AG04450 (cell line): ENCODE measurements at regions of chr6 and their contacts with region 1.

Region 1: GRCh38 chr6:32933636-32934085 is 7.2 kb downstream of the HLA-DMB start:
- DNase-seq: peak; percentile 56
- H3K4me3 ChIP-seq: no peak overlapping the region
- H3K27ac ChIP-seq: no peak overlapping the region
- H3K27me3 ChIP-seq: peaks cover 25% of the 10 kb centered on the region
- CTCF ChIP-seq: peak; percentile 82

Region 2: GRCh38 chr6:32879691-32880090 is 54.0 kb before region 1 on chr6:
- CTCF ChIA-PET with region 1: interaction called, 11 read pairs
- POLR2A ChIA-PET with region 1: no interaction called
- DNase-seq: no peak
- H3K4me3 ChIP-seq: no peak overlapping the region
- H3K27ac ChIP-seq: no peak overlapping the region
- H3K27me3 ChIP-seq: peaks cover 27% of the 10 kb centered on the region
- CTCF ChIP-seq: no peak

Region 3: DNA sequence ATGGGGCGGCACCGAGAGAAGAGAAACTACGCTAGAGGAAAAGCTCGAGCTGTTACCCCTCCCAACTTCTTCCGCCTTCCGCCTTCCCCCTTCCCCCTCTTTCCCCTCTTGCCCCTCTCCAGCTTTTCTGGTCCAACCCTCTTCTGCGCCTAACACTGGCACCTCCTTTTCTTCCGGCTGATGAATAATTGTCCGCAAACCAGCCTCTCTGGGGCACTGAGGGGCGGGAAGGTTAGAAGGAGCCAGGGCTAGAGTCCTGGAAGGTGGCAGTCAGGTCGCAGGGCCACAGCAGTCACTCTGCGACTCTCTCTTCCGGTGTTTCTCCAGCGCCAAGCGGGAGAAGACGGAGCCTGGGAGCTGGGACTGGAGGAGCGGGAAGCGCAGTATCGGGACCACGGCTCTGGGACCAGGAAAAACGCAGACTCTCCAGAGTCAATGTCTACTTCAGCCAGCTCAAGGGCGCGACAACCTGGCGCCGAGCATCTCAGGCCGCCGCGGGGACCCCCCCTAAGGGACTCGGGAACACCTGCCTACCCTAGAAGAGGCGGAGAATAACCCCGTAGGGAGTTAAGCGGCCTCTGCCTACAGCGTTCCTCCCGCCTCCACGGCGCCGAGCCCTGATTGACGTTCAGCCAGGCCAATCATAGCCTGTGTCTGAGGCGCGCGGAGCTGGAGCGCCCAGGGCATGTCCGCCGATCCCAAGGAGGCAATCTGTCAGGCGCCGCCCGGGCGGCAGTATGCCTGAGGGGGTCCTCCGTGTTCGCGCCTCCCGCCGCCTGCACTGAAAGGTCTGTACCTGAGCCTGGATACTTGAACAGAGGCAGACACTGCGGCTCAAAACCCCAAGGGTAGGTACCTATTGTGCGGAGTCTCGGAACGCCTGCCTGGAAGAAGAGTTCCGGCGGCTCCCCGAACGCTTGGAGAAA is 39.3 kb before region 1 on chr6:
- CTCF ChIA-PET with region 1: interaction called, 16 read pairs
- POLR2A ChIA-PET with region 1: no interaction called
- DNase-seq: peak; percentile 77
- H3K4me3 ChIP-seq: peak overlapping the region; percentile 77
- H3K27ac ChIP-seq: peak overlapping the region; percentile 66
- H3K27me3 ChIP-seq: no peaks in the 10 kb centered on the region
- CTCF ChIP-seq: no peak

Region 4: GRCh38 chr6:32912951-32913350 is 20.7 kb before region 1 on chr6:
- CTCF ChIA-PET with region 1: interaction called, 15 read pairs
- POLR2A ChIA-PET with region 1: no interaction called
- DNase-seq: no peak
- H3K4me3 ChIP-seq: no peak overlapping the region
- H3K27ac ChIP-seq: no peak overlapping the region
- H3K27me3 ChIP-seq: peaks cover 2% of the 10 kb centered on the region
- CTCF ChIP-seq: no peak

Region 5: DNA sequence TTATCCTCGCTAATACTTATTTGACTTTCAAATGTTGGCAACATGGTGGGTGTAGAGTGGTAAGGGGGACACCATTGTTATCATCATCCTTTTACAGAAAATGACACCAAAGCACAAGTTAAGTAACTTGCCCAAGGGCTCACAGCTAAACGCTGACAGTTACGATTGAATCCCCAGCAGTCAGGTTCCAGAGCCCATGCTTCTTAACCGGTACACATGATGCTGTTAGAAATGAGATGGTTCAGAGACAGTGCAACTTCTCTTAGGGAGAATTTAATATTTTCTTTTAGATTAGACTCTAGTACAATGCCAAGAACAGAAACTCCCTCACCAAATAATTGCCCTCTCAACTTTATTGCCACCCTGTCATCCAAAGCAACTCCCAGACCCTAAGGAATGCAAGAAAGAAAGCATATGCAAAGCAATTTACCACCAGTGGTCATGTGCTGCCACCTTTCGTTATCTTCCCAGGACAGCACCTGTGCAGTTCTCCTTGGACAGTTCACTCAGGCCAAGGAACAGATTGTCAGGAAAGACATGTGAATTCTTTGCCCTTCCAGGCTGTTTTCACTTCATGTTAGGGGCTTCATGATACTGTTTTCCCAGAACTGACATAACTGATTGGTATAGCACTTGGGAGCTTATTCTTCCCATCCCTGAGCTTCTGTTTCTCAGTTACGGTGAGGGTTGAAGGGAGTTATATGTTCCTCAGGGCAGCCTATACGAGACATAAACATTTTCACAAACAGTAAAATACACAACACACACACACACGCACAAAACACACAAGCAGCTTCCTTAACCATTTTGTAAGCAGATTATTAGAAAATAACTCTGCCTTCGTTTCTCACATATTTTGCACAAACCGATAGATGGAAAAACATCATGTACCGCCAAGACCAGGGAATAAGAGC is 14.1 kb after region 1 on chr6:
- CTCF ChIA-PET with region 1: interaction called, 144 read pairs
- POLR2A ChIA-PET with region 1: no interaction called
- DNase-seq: no peak
- H3K4me3 ChIP-seq: no peak overlapping the region
- H3K27ac ChIP-seq: no peak overlapping the region
- H3K27me3 ChIP-seq: no peaks in the 10 kb centered on the region
- CTCF ChIP-seq: peak; percentile 56

Region 6: DNA sequence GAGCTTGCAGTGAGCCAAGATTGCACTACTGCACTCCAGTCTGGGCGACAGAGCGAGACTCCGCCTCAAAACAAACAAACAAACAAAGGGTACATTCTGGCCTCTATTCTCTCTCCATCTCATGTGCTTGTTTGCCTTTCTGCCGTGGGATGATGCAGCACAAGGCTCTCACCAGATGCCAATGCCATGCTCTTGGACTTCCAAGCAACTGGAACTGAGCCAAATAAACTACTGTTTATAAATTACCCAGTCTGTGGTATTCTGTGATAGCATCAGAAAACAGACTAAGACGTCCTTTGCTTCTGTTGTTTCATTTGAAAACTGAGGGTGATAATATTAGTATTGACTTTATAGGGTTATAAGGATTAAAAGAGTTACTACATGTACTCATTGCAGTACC is 31.1 kb after region 1 on chr6:
- CTCF ChIA-PET with region 1: interaction called, 56 read pairs
- POLR2A ChIA-PET with region 1: interaction called, 4 read pairs
- DNase-seq: no peak
- H3K4me3 ChIP-seq: no peak overlapping the region
- H3K27ac ChIP-seq: no peak overlapping the region
- H3K27me3 ChIP-seq: no peaks in the 10 kb centered on the region
- CTCF ChIP-seq: no peak

Region 7: GRCh38 chr6:33312409-33313158 is 378.9 kb after region 1 on chr6:
- CTCF ChIA-PET with region 1: no interaction called
- POLR2A ChIA-PET with region 1: no interaction called
- DNase-seq: no peak
- H3K4me3 ChIP-seq: peak overlapping the region; percentile 95
- H3K27ac ChIP-seq: peak overlapping the region; percentile 94
- H3K27me3 ChIP-seq: no peaks in the 10 kb centered on the region
- CTCF ChIP-seq: 0 out of 2 replicates have a peak, but pooled peaks have one; percentile 4

Region 8: GRCh38 chr6:33620856-33621710 is 687.4 kb after region 1 on chr6 and contains the start of gene ITPR3:
- CTCF ChIA-PET with region 1: no interaction called
- POLR2A ChIA-PET with region 1: no interaction called
- DNase-seq: no peak
- H3K4me3 ChIP-seq: peak within 1 kb of the TSS; percentile 63
- H3K27ac ChIP-seq: no peak within 1 kb of the TSS
- H3K27me3 ChIP-seq: no peaks in the 10 kb centered on the region
- CTCF ChIP-seq: no peak
- polyA plus RNA-seq, gene ITPR3: 4.4 and 4.8 TPM in 2 replicates